ENCODE measurements at regions of chr19 and their contacts with region 1.

Region 1: GRCh38 chr19:48170038-48170812 is at the starts of genes LIG1 and ZSWIM9:
- DNase-seq: peak; percentile 82 to 95 (median 88)
- ATAC-seq: peak; percentile 89 to 91 (median 90)
- H3K4me3 ChIP-seq: peak within 1 kb of the TSS; percentile 77 to 97
- H3K4me3 Mint-ChIP-seq: peak within 1 kb of the TSS; percentile 88 to 91 (median 90)
- H3K27ac ChIP-seq: peak within 1 kb of the TSS; percentile 85
- H3K27ac Mint-ChIP-seq: peak within 1 kb of the TSS; percentile 91 to 99
- H3K4me1 ChIP-seq: peaks cover 11 to 18% of the 10 kb centered on the region in 2 experiments
- H3K4me1 Mint-ChIP-seq: peaks cover 18 to 43% (median 26%) of the 10 kb centered on the region in 3 donors
- H3K27me3 ChIP-seq: no peaks in the 10 kb centered on the region
- H3K27me3 Mint-ChIP-seq: no peaks in the 10 kb centered on the region
- total RNA-seq, gene LIG1: 58.7 to 127 (median 112) TPM
- total RNA-seq, gene ZSWIM9: 5.4 to 14.7 (median 11.6) TPM

Region 2: GRCh38 chr19:46947866-46948265 is 1222.4 kb before region 1 on chr19:
- CTCF ChIA-PET with region 1: interaction called in 1 of 2 experiments, 10 read pairs
- POLR2A ChIA-PET with region 1: no interaction called
- DNase-seq: no peak
- ATAC-seq: no peak
- H3K4me3 ChIP-seq: no peak overlapping the region
- H3K4me3 Mint-ChIP-seq: no peak overlapping the region
- H3K27ac ChIP-seq: no peak overlapping the region
- H3K27ac Mint-ChIP-seq: peak overlapping the region in 1 of 2 donors; percentile 39
- H3K4me1 ChIP-seq: peaks cover 0 to 45% of the 10 kb centered on the region in 2 experiments
- H3K4me1 Mint-ChIP-seq: peaks cover 23 to 69% (median 59%) of the 10 kb centered on the region in 3 donors
- H3K27me3 ChIP-seq: no peaks in the 10 kb centered on the region
- H3K27me3 Mint-ChIP-seq: no peaks in the 10 kb centered on the region

Region 3: DNA sequence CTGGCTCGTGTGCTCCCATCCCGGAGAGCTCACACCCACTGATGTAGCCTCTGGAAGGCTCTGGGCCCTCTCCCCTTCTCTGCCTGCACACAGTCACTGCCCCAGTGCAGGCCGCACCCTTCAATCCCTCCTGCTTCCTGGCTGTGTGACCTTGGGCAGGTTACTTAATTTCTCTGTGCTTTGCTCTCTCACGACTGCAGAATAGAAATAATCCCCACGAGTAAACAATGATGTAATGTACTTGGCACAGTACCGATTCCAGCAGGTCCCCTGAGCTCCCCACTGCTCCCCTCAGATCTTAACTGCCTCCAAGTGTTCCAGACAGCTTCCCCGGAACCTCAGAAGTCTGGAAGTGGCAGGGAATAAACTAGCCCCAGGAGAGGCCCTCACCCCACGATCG is 16.2 kb before region 1 on chr19:
- CTCF ChIA-PET with region 1: interaction called in 1 of 2 experiments, 10 read pairs
- POLR2A ChIA-PET with region 1: no interaction called
- DNase-seq: no peak
- ATAC-seq: no peak
- H3K4me3 ChIP-seq: no peak overlapping the region
- H3K4me3 Mint-ChIP-seq: no peak overlapping the region
- H3K27ac ChIP-seq: no peak overlapping the region
- H3K27ac Mint-ChIP-seq: no peak overlapping the region
- H3K4me1 ChIP-seq: no peaks in the 10 kb centered on the region
- H3K4me1 Mint-ChIP-seq: peaks cover 0 to 2% (median 0%) of the 10 kb centered on the region in 3 donors
- H3K27me3 ChIP-seq: no peaks in the 10 kb centered on the region
- H3K27me3 Mint-ChIP-seq: no peaks in the 10 kb centered on the region

Region 4: DNA sequence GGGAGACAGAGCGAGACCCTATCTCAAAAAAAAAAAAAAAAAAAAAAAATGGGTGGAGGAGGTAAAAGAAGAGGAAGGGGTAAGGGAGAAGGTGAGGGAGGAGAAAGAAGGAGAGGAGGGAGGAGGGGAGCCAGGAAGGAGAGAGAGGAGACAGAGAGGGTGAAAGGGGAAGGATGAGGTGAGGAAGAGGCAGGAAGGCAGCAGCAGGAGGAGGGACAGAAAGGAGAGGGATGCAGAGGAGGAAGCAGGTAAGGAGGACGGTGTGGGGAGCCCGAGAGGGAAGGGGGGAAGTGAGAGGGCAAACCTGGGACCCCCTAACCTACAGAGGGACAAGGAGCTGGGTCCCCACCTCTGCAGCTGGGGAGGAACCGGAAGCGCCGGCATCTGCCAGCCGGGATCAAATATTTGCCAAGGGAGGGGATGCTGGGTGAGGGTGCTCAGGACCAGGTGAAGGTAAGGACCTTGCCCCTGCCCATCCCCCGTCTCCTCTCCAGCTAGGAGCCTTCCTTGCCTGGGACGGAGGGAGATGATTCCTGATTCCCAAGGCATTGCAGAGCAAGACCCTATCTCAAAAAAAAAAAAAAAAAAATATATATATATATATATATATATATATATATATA is 432.0 kb after region 1 on chr19:
- CTCF ChIA-PET with region 1: no interaction called
- POLR2A ChIA-PET with region 1: interaction called in 1 of 2 experiments, 10 read pairs
- DNase-seq: no peak
- ATAC-seq: no peak
- H3K4me3 ChIP-seq: no peak overlapping the region
- H3K4me3 Mint-ChIP-seq: no peak overlapping the region
- H3K27ac ChIP-seq: no peak overlapping the region
- H3K27ac Mint-ChIP-seq: no peak overlapping the region
- H3K4me1 ChIP-seq: peaks cover 0 to 8% of the 10 kb centered on the region in 2 experiments
- H3K4me1 Mint-ChIP-seq: peaks cover 0 to 4% (median 4%) of the 10 kb centered on the region in 3 donors
- H3K27me3 ChIP-seq: peaks cover 0 to 20% of the 10 kb centered on the region in 2 experiments
- H3K27me3 Mint-ChIP-seq: no peaks in the 10 kb centered on the region